ENCODE measurements at regions of chr1 and their contacts with region 1.

Region 1: DNA sequence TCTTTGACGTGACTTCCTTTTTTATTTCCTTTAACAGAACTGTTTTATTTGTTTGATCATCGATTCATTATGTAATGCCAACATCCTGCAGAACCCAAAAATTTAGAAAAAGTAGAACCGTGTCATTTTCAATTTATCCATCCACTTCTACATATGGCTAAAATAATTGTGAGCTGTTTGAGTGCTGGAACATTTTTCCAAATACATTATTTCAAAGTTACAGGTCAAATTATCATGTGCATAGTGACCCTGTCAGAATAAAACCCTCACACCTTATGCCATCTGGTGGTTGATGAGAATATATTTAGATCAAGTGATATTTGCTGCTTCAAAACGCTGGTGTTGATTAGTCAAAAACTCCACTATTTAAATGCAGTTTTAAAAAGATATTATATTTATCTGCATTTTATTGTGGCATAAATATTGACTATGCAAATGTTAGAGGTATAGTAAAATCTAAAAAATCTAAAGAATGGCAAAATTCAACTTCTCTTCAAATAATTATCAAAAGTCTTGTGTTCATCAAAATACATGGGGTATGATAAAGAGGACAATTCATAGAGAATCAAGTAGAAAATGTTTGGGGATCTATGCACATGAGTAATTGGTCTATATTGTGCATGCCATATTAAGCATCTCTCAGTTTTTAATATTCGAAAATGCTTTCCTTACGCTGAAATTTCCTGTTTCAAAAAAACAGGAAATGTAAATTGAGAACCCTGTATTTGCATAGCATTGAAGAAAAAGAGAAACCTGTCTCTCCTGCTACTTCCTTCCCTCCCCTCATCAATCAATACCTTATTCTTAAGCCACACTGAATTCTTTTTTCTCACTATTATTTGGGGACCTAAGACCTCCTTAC is 39.7 kb downstream of the UBE2U start:
- DNase-seq: no peak
- H3K4me3 ChIP-seq: no peak overlapping the region
- H3K27ac ChIP-seq: no peak overlapping the region
- H3K27me3 ChIP-seq: no peaks in the 10 kb centered on the region
- CTCF ChIP-seq: peak; percentile 49

Region 2: DNA sequence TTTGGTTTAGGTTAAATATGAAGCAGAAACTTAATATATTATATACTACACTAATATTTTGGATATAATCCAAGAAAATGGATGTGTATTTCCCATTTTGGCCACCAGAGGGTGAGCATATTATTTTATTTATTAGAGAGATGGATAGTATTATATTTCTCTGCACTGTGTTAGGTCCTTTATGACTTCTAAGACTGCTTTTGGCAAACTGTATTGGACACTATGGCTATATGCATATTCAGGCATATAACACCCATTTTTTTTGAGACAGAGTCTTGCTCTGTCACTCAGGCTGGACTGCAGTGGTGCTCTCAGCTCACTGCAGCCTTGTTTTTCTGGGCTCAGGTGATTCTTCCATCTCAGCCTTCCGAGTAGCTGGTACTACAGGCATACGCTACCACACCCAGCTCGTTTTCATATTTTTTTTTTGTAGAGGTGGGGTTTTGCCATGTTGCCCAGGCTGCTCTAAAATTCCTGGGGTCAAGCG is 667.7 kb before region 1 on chr1:
- CTCF ChIA-PET with region 1: interaction called, 28 read pairs
- POLR2A ChIA-PET with region 1: no interaction called
- DNase-seq: no peak
- H3K4me3 ChIP-seq: no peak overlapping the region
- H3K27ac ChIP-seq: no peak overlapping the region
- H3K27me3 ChIP-seq: no peaks in the 10 kb centered on the region
- CTCF ChIP-seq: peak; percentile 63

Region 3: GRCh38 chr1:63674238-63674864 is 568.8 kb before region 1 on chr1:
- CTCF ChIA-PET with region 1: interaction called, 141 read pairs
- POLR2A ChIA-PET with region 1: no interaction called
- DNase-seq: peak; percentile 74
- H3K4me3 ChIP-seq: no peak overlapping the region
- H3K27ac ChIP-seq: no peak overlapping the region
- H3K27me3 ChIP-seq: no peaks in the 10 kb centered on the region
- CTCF ChIP-seq: peak; percentile 85

Region 4: GRCh38 chr1:63920154-63921117 is 322.7 kb before region 1 on chr1:
- CTCF ChIA-PET with region 1: interaction called, 10 read pairs
- POLR2A ChIA-PET with region 1: no interaction called
- DNase-seq: peak; percentile 39
- H3K4me3 ChIP-seq: no peak overlapping the region
- H3K27ac ChIP-seq: no peak overlapping the region
- H3K27me3 ChIP-seq: peaks cover 3% of the 10 kb centered on the region
- CTCF ChIP-seq: peak; percentile 51